WTC11 (cell line): ENCODE measurements at regions of chr16 and their contacts with region 1.

Region 1: DNA sequence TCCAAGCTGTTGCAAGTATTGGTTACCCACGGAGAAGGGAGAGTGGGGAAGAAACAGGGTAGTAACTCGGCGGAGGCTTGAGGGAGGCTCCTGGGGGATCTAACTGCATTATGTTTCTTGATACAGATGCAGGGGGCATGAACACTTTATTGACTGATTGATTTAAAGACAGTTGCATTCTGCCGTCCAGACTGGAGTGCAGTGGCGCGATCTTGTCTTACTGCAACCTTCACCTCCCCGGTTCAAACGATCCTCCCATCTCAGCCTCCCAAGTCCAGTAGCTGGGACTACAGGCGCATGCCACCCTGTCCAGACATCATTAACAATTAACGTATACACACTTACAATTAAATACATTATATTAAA is 15.1 kb upstream of the ERN2 start:
- DNase-seq: no peak
- ATAC-seq: peak; percentile 7; the same call in 1 of the 2 replicates
- H3K4me3 Mint-ChIP-seq: no peak overlapping the region
- H3K27ac Mint-ChIP-seq: no peak overlapping the region
- H3K4me1 Mint-ChIP-seq: peaks cover 14% of the 10 kb centered on the region
- H3K27me3 Mint-ChIP-seq: peaks cover 3% of the 10 kb centered on the region; the same call in 1 of the 2 replicates
- CTCF ChIP-seq: no peak

Region 2: GRCh38 chr16:23629516-23629915 is 98.6 kb before region 1 on chr16:
- CTCF ChIA-PET with region 1: no interaction called
- POLR2A ChIA-PET with region 1: no interaction called
- DNase-seq: no peak
- ATAC-seq: no peak
- H3K4me3 Mint-ChIP-seq: no peak overlapping the region
- H3K27ac Mint-ChIP-seq: no peak overlapping the region
- H3K4me1 Mint-ChIP-seq: no peaks in the 10 kb centered on the region
- H3K27me3 Mint-ChIP-seq: no peaks in the 10 kb centered on the region
- CTCF ChIP-seq: no peak

Region 3: GRCh38 chr16:23694644-23695373 is 33.3 kb before region 1 on chr16:
- CTCF ChIA-PET with region 1: interaction called, 18 read pairs
- POLR2A ChIA-PET with region 1: interaction called, 3 read pairs
- DNase-seq: peak; percentile 85
- ATAC-seq: peak; percentile 88
- H3K4me3 Mint-ChIP-seq: peak overlapping the region; percentile 79
- H3K27ac Mint-ChIP-seq: peak overlapping the region; percentile 69
- H3K4me1 Mint-ChIP-seq: peaks cover 12% of the 10 kb centered on the region
- H3K27me3 Mint-ChIP-seq: no peaks in the 10 kb centered on the region
- CTCF ChIP-seq: no peak

Region 4: GRCh38 chr16:23748630-23749029 is 20.5 kb after region 1 on chr16:
- CTCF ChIA-PET with region 1: no interaction called
- POLR2A ChIA-PET with region 1: no interaction called
- DNase-seq: no peak
- ATAC-seq: no peak
- H3K4me3 Mint-ChIP-seq: no peak overlapping the region
- H3K27ac Mint-ChIP-seq: no peak overlapping the region
- H3K4me1 Mint-ChIP-seq: no peaks in the 10 kb centered on the region
- H3K27me3 Mint-ChIP-seq: peaks cover 57% of the 10 kb centered on the region
- CTCF ChIP-seq: no peak

Region 5: GRCh38 chr16:23781177-23781576 is 53.1 kb after region 1 on chr16:
- CTCF ChIA-PET with region 1: no interaction called
- POLR2A ChIA-PET with region 1: no interaction called
- DNase-seq: no peak
- ATAC-seq: no peak
- H3K4me3 Mint-ChIP-seq: no peak overlapping the region
- H3K27ac Mint-ChIP-seq: no peak overlapping the region
- H3K4me1 Mint-ChIP-seq: peaks cover 20% of the 10 kb centered on the region
- H3K27me3 Mint-ChIP-seq: peaks cover 68% of the 10 kb centered on the region
- CTCF ChIP-seq: no peak